Cardiac septum (tissue), 1 donor: ENCODE measurements at regions of chr6 and their contacts with region 1.

Region 1: GRCh38 chr6:13526727-13527670 is 39.6 kb upstream of the GFOD1 start:
- DNase-seq: no peak

Region 2: DNA sequence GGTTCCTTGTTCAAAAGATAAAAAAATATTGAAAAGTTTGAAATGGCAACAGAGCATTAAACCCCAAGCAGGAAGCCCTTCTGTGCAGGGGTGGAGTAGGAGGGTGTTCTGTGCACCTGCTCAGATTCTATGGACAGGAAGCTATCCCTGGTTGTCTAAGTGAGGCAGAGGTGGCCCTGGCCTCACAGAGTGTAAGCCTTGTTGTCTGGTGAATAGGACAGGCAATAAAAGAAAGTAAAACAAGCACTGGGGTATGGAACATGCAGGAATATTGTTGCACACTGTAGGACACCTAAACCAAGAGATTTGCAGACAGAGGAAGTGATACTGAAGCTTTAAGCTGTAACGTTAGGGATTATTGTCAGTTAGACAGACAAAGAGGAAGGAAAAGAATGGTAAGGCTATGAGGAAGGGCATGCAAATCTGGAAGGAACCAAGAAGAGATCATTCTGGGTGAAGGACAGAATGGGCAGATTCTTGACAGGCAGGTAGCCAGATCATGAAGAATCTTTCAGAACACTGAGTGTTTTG is 265.5 kb before region 1 on chr6:
- intact Hi-C with region 1: no loop called
- DNase-seq: no peak

Region 3: GRCh38 chr6:13413900-13414555 is 113.0 kb before region 1 on chr6:
- intact Hi-C with region 1: loop called (anchors 5 kb)
- DNase-seq: no peak

Region 4: GRCh38 chr6:13445005-13445743 is 81.8 kb before region 1 on chr6:
- intact Hi-C with region 1: no loop called
- DNase-seq: no peak

Region 5: DNA sequence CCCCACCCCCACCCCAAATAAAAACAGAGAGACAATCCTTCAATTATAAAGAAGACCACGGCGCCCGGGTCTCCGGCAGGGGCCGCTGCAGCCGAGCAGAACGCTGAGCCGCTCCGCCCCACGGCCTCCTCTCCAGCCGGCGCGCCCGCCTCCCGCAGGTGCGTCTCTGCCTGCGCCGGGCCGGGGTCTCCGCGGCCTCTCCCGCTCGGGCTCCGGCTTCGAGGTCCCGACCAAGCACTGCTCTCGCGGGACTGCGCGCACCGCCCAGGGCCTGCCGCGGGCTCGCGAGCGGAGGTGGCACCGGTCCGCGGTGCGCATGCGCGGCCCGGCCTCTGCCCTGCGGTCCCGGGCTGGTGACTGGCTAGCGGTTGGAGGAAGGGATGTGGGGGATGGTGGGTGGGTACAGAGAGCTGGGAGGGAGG is 47.2 kb after region 1 on chr6:
- intact Hi-C with region 1: loop called (anchors 5 kb)
- DNase-seq: peak; percentile 95